Caco-2 (cell line): ENCODE measurements at regions of chr5 and their contacts with region 1.

Region 1: GRCh38 chr5:128083033-128083810 is at the start of gene SLC12A2:
- DNase-seq: peak; percentile 93
- H3K4me3 ChIP-seq: peak within 1 kb of the TSS; percentile 97
- H3K4me3 Mint-ChIP-seq: peak within 1 kb of the TSS; percentile 87
- H3K27ac Mint-ChIP-seq: peak within 1 kb of the TSS; percentile 81
- H3K4me1 ChIP-seq: peaks cover 15% of the 10 kb centered on the region; the same call in 1 of the 2 replicates
- H3K4me1 Mint-ChIP-seq: peaks cover 47% of the 10 kb centered on the region
- H3K27me3 ChIP-seq: no peaks in the 10 kb centered on the region
- H3K27me3 Mint-ChIP-seq: no peaks in the 10 kb centered on the region
- CTCF ChIP-seq: no peak
- total RNA-seq, gene SLC12A2: 85.2 and 87.8 TPM in 2 replicates

Region 2: DNA sequence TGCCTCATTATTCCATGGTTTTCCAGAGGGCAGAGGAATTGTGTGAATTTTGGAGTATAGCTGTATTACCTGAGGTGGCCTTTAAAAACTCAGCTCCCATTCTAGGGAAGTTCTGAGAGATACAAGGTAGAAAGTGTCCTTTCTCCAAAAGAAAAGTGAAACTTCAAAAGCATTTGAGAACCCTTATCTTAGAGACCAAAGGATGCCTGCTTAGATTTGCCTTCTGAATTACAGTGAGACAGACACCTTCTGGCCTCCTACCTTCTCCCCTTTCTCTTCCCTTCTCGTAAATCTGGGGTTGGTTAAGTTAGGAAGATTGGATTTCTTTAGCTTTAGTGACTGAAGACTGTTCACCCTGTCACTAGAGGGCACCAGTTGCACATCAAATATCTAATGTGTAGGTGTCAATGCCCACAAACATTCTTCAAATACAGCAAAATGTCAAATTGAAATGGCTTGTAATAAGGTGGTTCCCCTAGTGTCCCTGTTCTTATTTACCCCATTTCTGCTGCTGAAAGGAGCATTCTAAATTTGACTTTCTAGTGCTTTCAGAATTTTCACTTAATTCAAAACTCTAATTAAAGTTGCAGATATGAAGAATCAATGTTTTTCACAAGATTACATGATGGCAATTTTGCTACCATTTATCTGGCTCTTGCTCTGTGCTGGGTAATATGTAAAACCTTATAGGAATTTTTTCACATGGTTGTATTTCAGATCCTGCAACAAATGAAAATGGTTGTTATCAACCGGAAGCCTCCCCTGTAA is 519.0 kb before region 1 on chr5:
- CTCF ChIA-PET with region 1: interaction called, 3 read pairs
- POLR2A ChIA-PET with region 1: no interaction called
- intact Hi-C with region 1: loop called (anchors 5 kb)
- DNase-seq: peak; percentile 53 to 71
- H3K4me3 ChIP-seq: no peak overlapping the region
- H3K4me3 Mint-ChIP-seq: no peak overlapping the region
- H3K27ac Mint-ChIP-seq: no peak overlapping the region
- H3K4me1 ChIP-seq: no peaks in the 10 kb centered on the region
- H3K4me1 Mint-ChIP-seq: no peaks in the 10 kb centered on the region
- H3K27me3 ChIP-seq: no peaks in the 10 kb centered on the region
- H3K27me3 Mint-ChIP-seq: no peaks in the 10 kb centered on the region
- CTCF ChIP-seq: peak; percentile 60 to 80

Region 3: DNA sequence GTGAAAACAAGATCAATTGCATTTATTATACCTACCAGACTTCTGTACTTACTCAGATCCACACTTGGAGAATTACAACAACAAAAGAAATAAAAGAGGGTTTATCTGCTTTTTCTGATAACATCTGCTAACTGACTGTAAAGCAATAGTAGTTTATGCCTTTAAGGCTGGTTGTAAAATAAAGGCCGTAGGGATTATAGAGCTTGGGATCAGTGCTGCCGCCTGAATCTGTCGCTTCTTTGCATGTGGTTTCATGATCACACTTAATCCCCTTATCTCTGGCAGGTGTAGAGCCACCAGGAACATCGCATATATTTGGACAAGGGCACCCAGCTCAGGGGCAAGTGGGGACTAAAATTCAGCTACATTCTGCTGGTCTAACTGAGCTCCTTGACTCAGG is 233.3 kb before region 1 on chr5:
- CTCF ChIA-PET with region 1: no interaction called
- POLR2A ChIA-PET with region 1: no interaction called
- intact Hi-C with region 1: loop called (anchors 1 kb)
- DNase-seq: peak; percentile 84 to 88
- H3K4me3 ChIP-seq: no peak overlapping the region
- H3K4me3 Mint-ChIP-seq: no peak overlapping the region
- H3K27ac Mint-ChIP-seq: peak overlapping the region; percentile 57
- H3K4me1 ChIP-seq: peaks cover 26% of the 10 kb centered on the region
- H3K4me1 Mint-ChIP-seq: peaks cover 21% of the 10 kb centered on the region
- H3K27me3 ChIP-seq: no peaks in the 10 kb centered on the region
- H3K27me3 Mint-ChIP-seq: no peaks in the 10 kb centered on the region
- CTCF ChIP-seq: no peak

Region 4: GRCh38 chr5:127958421-127959011 is 124.7 kb before region 1 on chr5:
- CTCF ChIA-PET with region 1: no interaction called
- POLR2A ChIA-PET with region 1: no interaction called
- intact Hi-C with region 1: loop called (anchors 1 kb)
- DNase-seq: peak; percentile 55 to 58
- H3K4me3 ChIP-seq: no peak overlapping the region
- H3K4me3 Mint-ChIP-seq: peak overlapping the region; percentile 37
- H3K27ac Mint-ChIP-seq: peak overlapping the region; percentile 65
- H3K4me1 ChIP-seq: peaks cover 19% of the 10 kb centered on the region
- H3K4me1 Mint-ChIP-seq: peaks cover 39% of the 10 kb centered on the region
- H3K27me3 ChIP-seq: no peaks in the 10 kb centered on the region
- H3K27me3 Mint-ChIP-seq: no peaks in the 10 kb centered on the region
- CTCF ChIP-seq: no peak

Region 5: DNA sequence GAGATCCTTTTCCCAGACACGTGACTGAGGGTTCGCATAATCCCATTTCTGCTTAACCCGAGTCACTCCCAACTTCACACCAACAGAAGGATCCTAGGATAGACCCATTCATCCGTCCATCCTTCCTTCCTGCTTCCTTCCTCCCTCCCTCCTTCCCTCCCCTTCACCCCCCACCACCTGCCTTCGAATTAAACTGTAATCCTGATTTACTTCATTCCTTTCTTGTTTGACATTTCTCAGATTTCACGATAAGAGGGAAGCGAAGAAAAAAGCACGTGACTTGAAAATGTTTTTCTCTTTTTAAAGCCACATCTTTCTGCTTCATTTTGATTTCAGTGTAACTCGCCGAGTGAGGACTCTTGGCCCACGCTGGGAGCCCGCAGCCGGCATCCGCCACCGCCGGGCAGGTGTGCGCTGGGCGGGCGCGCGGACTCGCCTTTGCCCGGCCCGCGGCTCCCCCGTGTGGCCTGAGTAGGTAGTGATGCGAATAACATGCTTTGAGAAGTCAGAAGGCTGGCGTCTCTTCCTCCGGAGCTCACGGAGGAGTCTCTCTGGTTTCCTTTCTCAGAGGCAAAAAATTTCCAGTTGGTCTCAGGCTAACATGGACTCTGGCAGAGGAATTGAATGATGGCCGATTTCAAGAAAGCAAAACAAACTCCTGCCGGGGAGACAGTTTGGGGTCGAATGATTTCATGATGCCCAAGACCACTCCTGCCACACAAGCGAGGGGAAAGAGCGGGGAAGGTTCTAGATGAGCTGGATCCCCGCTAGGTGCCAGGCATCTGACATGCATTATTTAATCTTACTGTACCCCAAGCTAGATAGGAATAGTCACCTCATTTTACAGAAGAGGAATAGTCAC is 118.1 kb after region 1 on chr5:
- CTCF ChIA-PET with region 1: no interaction called
- POLR2A ChIA-PET with region 1: no interaction called
- intact Hi-C with region 1: loop called (anchors 2 kb)
- DNase-seq: peak; percentile 75 to 87
- H3K4me3 ChIP-seq: no peak overlapping the region
- H3K4me3 Mint-ChIP-seq: peak overlapping the region; percentile 57
- H3K27ac Mint-ChIP-seq: no peak overlapping the region
- H3K4me1 ChIP-seq: peaks cover 21% of the 10 kb centered on the region
- H3K4me1 Mint-ChIP-seq: peaks cover 25% of the 10 kb centered on the region
- H3K27me3 ChIP-seq: no peaks in the 10 kb centered on the region
- H3K27me3 Mint-ChIP-seq: no peaks in the 10 kb centered on the region
- CTCF ChIP-seq: peak; percentile 77 to 83